Cardiac septum (tissue), 1 donor: ENCODE measurements at regions of chr13 and their contacts with region 1.

Region 1: GRCh38 chr13:39527961-39528660 is 74.9 kb downstream of the LHFPL6 start:
- DNase-seq: no peak

Region 2: DNA sequence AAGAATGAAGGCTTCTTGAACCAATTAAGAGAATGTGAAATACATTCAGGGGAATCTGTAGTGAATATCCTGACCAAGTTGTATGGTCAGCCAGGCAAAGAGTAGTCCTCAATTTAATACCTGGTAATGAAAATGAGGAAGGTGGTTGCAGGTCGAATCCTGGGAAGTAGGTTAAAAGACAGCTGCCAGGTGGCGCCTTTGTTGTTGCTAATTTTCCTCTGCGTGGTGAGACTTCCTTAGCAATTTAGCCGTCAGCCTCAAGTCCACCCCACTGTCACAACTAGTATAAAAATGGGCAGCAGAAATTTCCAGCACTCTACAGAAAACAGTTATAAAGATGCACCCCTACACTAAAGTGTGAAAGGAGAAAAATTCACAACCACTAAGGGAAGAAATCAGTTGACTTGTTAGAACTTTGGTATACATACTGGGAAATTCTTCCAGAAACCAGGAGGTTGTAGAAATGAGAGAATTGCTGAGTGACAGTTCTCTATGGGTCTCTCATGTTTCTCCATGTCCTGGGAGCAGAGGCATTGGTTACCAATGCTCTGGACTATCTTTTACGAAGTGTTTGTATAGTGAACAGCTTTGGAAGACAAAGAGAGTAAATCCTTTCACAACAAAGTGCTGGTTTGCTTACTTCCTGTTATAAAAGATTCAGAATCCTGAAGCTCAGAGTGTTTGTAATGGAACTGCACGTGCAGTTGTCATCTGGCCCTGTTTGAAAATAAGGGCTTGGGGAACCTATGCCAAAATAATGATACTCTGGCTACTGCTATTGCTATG is 254.0 kb before region 1 on chr13:
- intact Hi-C with region 1: no loop called
- DNase-seq: no peak

Region 3: GRCh38 chr13:39565036-39565949 is 37.2 kb after region 1 on chr13:
- intact Hi-C with region 1: loop called (anchors 5 kb)
- DNase-seq: no peak